ENCODE measurements at regions of chr6 and their contacts with region 1.

Region 1: DNA sequence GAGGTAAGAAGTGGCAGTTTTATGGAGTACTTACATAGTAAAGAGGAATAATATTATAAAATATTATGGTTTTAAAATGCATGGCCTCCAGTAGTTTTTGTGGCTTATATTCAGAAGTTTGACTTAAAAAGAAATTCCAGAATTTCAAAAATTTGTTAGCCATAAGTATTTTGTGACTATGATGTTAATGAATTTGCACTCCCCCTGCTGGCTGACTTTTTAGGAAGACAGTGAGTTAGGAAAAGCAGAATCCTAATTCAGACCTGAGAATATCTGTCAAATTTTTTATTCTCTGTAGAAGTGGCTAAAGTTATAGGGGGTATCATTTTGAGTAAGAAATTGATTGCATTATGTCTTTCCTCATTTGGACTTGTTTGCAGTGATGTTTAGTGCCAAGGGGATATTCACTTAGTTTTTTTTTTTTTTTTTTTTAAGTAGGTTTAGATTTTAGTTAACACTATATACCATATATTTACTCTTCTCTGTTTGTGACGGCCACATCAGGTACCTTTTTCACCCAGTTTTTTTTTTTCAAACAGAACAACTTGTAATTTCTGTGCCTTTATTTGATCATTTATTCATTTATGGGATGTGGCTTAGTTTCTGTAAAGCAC is 40.8 kb downstream of the ZFAND3 start:
- DNase-seq: no peak
- H3K4me3 ChIP-seq: no peak overlapping the region
- H3K27ac ChIP-seq: no peak overlapping the region
- H3K4me1 ChIP-seq: no peaks in the 10 kb centered on the region
- H3K27me3 ChIP-seq: no peaks in the 10 kb centered on the region
- CTCF ChIP-seq: peak in 1 of 3 experiments; percentile 45; a peak in 1 of 4 replicates
- EP300 ChIP-seq: no peak
- POLR2A ChIP-seq: no peak
- RAD21 ChIP-seq: peak in 1 of 2 experiments; percentile 20; a peak in 2 of 4 replicates

Region 2: GRCh38 chr6:37845026-37845911 is 15.1 kb before region 1 on chr6:
- CTCF ChIA-PET with region 1: interaction called, 10 read pairs
- POLR2A ChIA-PET with region 1: no interaction called
- DNase-seq: no peak
- H3K4me3 ChIP-seq: no peak overlapping the region
- H3K27ac ChIP-seq: no peak overlapping the region
- H3K4me1 ChIP-seq: no peaks in the 10 kb centered on the region
- H3K27me3 ChIP-seq: no peaks in the 10 kb centered on the region
- CTCF ChIP-seq: no peak
- EP300 ChIP-seq: no peak
- POLR2A ChIP-seq: no peak
- RAD21 ChIP-seq: no peak